HepG2 (cell line): ENCODE measurements at regions of chr14 and their contacts with region 1.

Region 1: DNA sequence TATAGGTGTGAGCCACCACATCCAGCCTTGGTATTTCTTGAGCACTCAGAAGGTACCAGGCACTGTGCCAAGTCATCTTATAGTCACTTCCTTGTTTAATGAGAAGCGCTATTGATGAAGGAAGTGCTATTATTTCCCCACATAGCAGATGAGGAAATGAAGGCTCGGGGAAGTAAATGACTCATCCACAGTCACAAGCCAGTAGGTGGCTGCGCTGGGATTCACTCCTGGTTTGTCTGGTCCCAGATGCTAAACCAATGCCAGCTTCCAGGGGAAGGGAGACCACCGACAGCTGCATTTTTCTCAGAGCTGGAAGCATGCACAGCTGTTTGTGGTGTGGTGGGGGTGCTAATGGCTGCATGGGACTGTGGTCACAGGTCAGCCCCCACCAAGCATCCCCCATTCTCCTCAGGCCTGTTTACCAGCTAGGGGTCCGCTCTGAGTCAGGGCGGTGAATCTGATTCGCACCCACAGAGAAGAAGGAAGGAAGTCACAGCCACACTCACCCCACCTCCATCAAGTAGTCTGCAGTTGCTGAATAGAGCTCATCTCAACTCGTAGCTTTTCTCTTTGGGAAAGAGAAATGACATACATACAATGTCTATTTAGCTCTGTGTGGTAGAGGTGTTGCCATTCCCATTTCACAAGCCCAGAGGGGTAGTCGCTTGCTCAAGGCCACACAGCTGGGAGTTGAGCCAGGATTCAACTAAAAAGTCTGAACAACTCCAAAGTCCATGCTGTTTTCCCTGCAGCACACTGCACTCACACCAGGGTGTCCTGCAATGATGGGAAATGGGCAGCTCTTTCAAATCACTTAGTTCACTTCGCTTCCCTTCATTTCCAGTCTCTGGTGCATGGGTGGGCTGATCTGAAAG is 6.3 kb upstream of the LTBP2 start:
- DNase-seq: peak; percentile 90
- ATAC-seq: peak; percentile 88
- H3K4me3 ChIP-seq: peak overlapping the region; percentile 5 to 62 (median 20); a peak in 3 of 6 replicates
- H3K27ac ChIP-seq: peak overlapping the region; percentile 50
- H3K4me1 ChIP-seq: peaks cover 62% of the 10 kb centered on the region
- H3K27me3 ChIP-seq: no peaks in the 10 kb centered on the region
- CTCF ChIP-seq: peak; percentile 36
- EP300 ChIP-seq: peak in 1 of 2 experiments; percentile 56; a peak in 1 of 4 replicates
- POLR2A ChIP-seq: peak in 1 of 2 experiments; percentile 47; a peak in 1 of 4 replicates
- RAD21 ChIP-seq: peak; percentile 30; the same call in 1 of the 2 replicates

Region 2: DNA sequence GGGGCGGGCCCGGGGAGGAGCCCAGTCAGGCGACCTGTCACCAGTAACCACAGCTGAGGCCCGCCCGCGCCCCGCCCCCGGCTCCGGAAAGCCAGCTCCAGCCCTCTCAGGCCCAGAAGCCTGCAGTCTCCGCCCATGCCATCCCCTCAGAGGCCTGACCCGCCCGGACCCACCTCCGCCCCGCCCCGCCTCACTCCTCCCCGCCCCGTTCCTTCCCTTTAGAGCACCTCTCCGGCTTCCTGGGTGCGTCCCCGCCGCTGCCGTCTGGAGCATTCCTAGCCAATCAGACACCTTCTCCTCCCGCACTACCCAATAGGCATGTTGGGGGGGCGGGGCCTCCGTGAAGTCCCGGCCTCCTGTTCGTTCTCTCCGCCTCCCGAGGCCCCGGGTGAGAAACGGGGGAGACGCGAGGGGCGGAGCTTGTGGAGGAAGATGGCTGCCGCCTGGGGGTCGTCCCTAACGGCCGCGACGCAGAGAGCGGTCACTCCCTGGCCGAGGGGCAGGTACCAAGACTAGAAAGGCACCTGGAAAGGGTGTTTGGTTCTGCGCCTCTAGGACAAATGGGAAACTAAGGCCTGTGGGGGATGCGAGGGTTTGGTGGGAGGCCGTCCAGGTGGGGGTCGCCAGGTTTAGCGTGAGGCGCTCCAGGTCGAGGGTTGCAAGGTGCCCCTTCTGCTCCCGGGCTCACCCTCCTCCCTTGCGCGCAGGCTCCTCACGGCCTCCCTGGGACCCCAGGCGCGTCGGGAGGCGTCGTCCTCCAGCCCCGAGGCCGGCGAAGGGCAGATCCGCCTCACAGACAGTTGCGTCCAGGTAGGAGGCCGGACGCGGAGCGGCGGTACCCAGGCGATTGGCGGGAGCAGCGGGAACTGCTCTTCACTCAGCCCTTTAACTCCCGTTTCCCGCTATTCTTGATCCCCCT is 124.7 kb before region 1 on chr14 and contains the start of gene ISCA2:
- CTCF ChIA-PET with region 1: no interaction called
- POLR2A ChIA-PET with region 1: interaction called, 11 read pairs
- in situ Hi-C with region 1: no loop called
- intact Hi-C with region 1: no loop called
- DNase-seq: peak; percentile 98
- ATAC-seq: peak; percentile 96
- H3K4me3 ChIP-seq: peak within 1 kb of the TSS; percentile 94 to 100 (median 99)
- H3K27ac ChIP-seq: peak within 1 kb of the TSS; percentile 97
- H3K4me1 ChIP-seq: peaks cover 35% of the 10 kb centered on the region
- H3K27me3 ChIP-seq: no peaks in the 10 kb centered on the region; a peak in 1 of 5 replicates
- CTCF ChIP-seq: no peak
- EP300 ChIP-seq: 0 out of 4 replicates have a peak, but pooled peaks of 1 of the 2 experiments have one; percentile 5
- POLR2A ChIP-seq: peak; percentile 69 to 83
- RAD21 ChIP-seq: no peak
- total RNA-seq, gene ISCA2: 43.4 and 53.0 TPM in 2 replicates

Region 3: GRCh38 chr14:74562515-74563232 is 55.6 kb before region 1 on chr14:
- CTCF ChIA-PET with region 1: no interaction called
- POLR2A ChIA-PET with region 1: no interaction called
- in situ Hi-C with region 1: no loop called
- intact Hi-C with region 1: no loop called
- DNase-seq: peak; percentile 40
- ATAC-seq: peak; percentile 81
- H3K4me3 ChIP-seq: no peak overlapping the region
- H3K27ac ChIP-seq: no peak overlapping the region
- H3K4me1 ChIP-seq: peaks cover 15% of the 10 kb centered on the region
- H3K27me3 ChIP-seq: peaks cover 0 to 27% of the 10 kb centered on the region in 2 experiments; a peak in 2 of 5 replicates
- CTCF ChIP-seq: 0 out of 2 replicates have a peak, but pooled peaks have one; percentile 8
- EP300 ChIP-seq: no peak
- POLR2A ChIP-seq: no peak
- RAD21 ChIP-seq: no peak

Region 4: GRCh38 chr14:74630881-74631690 is 12.8 kb after region 1 on chr14:
- CTCF ChIA-PET with region 1: no interaction called
- POLR2A ChIA-PET with region 1: interaction called, 28 read pairs
- in situ Hi-C with region 1: no loop called
- intact Hi-C with region 1: loop called (anchors 2 kb)
- DNase-seq: no peak
- ATAC-seq: peak; percentile 48
- H3K4me3 ChIP-seq: peak overlapping the region in 1 of 3 experiments; percentile 66; a peak in 2 of 6 replicates
- H3K27ac ChIP-seq: no peak overlapping the region
- H3K4me1 ChIP-seq: peaks cover 72% of the 10 kb centered on the region
- H3K27me3 ChIP-seq: no peaks in the 10 kb centered on the region
- CTCF ChIP-seq: no peak
- EP300 ChIP-seq: no peak
- POLR2A ChIP-seq: no peak
- RAD21 ChIP-seq: no peak

Region 5: DNA sequence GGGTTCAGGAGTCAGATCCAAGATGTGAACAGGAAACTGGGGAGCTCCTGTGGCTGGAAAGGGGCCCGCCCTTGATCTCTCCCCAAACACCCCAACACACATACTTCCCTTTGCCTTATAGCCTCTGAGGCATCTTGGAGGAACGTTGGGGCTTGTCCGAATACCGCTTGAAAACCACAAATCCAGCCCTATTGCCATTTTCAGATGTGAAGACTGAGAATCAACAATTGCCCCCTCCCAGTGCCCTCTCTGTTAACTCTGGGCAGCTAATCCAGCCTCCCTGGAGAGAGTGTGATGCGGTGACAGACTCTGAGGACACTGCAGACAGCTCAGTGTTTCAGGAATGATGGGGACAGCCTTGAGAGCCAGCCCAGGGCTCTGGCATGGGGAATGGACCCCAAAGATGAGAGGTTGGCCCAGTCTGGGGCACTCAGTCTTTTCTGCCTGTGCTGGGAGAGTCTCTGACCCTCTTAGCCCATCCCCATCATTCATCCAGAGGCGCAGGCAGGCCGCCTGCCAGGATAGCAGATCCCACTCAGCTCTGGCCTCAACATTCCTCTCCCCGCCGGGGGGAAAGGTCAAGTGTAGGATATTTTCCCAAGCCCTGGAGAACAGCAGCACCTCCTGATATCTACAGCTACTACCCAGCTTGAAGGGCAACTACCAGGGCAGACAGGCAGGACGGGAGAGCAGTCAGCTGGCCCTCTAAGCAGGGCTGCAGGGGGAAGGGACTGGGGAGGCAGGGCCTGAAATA is 18.3 kb after region 1 on chr14:
- CTCF ChIA-PET with region 1: no interaction called
- POLR2A ChIA-PET with region 1: interaction called, 14 read pairs
- in situ Hi-C with region 1: no loop called
- intact Hi-C with region 1: loop called (anchors 2 kb)
- DNase-seq: no peak
- ATAC-seq: peak; percentile 19; the same call in 2 of the 3 replicates
- H3K4me3 ChIP-seq: no peak overlapping the region
- H3K27ac ChIP-seq: no peak overlapping the region
- H3K4me1 ChIP-seq: peaks cover 46% of the 10 kb centered on the region
- H3K27me3 ChIP-seq: no peaks in the 10 kb centered on the region; a peak in 1 of 5 replicates
- CTCF ChIP-seq: no peak
- EP300 ChIP-seq: no peak
- POLR2A ChIP-seq: no peak
- RAD21 ChIP-seq: no peak